ENCODE measurements at regions of chr3 and their contacts with region 1.

Region 1: GRCh38 chr3:171181907-171182690 is 155.6 kb upstream of the SLC2A2 start:
- DNase-seq: no peak
- H3K4me3 ChIP-seq: no peak overlapping the region
- H3K27ac ChIP-seq: no peak overlapping the region
- H3K4me1 ChIP-seq: no peaks in the 10 kb centered on the region
- H3K27me3 ChIP-seq: no peaks in the 10 kb centered on the region
- CTCF ChIP-seq: no peak

Region 2: DNA sequence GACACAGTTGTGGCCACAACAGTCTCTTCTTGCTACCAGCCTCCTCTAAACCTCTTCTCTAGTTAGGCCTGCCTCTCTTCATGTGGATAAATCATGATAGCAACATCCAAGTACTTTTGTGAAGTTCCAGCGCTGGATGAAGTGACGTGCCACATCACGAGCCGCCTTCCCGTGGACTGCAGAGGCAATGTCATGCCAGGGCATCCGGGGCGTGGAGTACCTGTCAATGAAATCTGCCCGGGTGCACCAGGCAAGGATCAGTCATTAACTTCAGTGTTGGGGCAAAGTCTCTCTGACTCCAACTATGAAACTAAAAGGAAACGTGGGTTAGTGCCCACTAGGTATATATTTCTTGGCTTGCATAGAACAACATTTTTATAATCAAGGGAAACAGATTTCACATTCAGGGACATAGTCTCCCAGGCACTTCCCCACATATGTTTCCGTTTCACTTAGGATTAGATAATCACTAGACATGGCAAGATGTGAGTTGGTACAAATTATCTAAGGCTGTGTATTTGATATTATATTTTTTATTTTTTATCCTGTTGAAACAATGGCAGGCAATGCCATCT is 494.6 kb after region 1 on chr3:
- CTCF ChIA-PET with region 1: no interaction called
- POLR2A ChIA-PET with region 1: interaction called, 10 read pairs
- intact Hi-C with region 1: no loop called
- DNase-seq: no peak
- H3K4me3 ChIP-seq: no peak overlapping the region
- H3K27ac ChIP-seq: no peak overlapping the region
- H3K4me1 ChIP-seq: no peaks in the 10 kb centered on the region
- H3K27me3 ChIP-seq: no peaks in the 10 kb centered on the region
- CTCF ChIP-seq: no peak

Region 3: GRCh38 chr3:172869368-172869771 is 1687.3 kb after region 1 on chr3:
- CTCF ChIA-PET with region 1: no interaction called
- POLR2A ChIA-PET with region 1: no interaction called
- intact Hi-C with region 1: no loop called
- DNase-seq: no peak
- H3K4me3 ChIP-seq: no peak overlapping the region
- H3K27ac ChIP-seq: no peak overlapping the region
- H3K4me1 ChIP-seq: peaks cover 25% of the 10 kb centered on the region
- H3K27me3 ChIP-seq: no peaks in the 10 kb centered on the region
- CTCF ChIP-seq: no peak

Measured in A673 (cell line).